Sigmoid colon (tissue), 7 donors: ENCODE measurements at regions of chr20 and their contacts with region 1.

Region 1: DNA sequence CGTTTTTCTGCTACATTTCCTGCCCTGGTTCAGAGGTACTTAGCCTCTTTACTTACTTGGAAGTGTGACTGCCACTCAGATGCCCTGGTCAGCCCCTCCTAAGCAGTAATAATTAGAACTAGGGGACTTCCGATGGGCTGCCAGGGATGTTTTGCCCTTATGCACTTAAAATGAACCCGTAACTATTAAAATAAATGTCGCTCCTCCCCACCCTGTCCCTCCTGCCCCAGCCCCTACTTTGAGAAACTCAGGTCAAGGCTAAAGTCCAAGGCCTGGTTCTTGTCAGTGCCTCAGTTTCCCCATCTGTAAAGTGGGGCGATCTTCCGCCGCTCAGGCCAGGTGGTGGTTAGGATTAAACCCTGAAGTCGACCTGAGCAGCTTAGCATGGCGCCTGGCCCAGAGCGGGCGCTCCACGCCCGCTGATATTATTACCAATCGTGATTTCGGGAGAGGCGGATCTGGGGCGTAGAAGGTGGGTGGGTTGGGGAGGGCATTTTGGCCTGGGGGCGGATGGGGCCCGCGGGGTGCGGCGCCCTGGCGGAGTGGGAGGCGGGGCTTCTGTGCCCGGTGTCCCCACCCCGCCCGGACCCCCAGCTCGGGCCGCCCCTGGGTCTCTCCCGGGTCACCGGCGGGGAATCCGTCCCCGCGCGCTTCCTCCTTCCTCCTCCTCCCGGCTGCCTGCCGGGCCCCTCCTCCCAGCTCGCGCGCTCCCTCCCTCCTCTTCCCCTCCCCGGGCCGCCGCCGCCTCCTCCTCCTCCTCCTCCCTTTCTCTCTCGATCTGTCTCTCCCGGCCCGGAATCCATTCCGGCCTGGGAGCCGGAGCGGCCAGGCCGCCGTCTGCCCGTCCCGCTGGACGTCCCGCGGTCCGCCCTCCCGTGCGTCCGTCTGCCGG is at the start of gene SRC:
- DNase-seq: peak; percentile 95
- H3K4me3 ChIP-seq: peak within 1 kb of the TSS; percentile 60 to 95 (median 83)
- H3K27ac ChIP-seq: peak within 1 kb of the TSS; percentile 89 to 99 (median 93)
- H3K4me1 ChIP-seq: peaks cover 0 to 52% (median 46%) of the 10 kb centered on the region in 4 donors
- H3K27me3 ChIP-seq: no peaks in the 10 kb centered on the region
- CTCF ChIP-seq: no peak
- EP300 ChIP-seq: no peak
- POLR2A ChIP-seq: peak; percentile 59 to 61
- total RNA-seq, gene SRC: 28.1 to 52.3 (median 40.0) TPM

Region 2: DNA sequence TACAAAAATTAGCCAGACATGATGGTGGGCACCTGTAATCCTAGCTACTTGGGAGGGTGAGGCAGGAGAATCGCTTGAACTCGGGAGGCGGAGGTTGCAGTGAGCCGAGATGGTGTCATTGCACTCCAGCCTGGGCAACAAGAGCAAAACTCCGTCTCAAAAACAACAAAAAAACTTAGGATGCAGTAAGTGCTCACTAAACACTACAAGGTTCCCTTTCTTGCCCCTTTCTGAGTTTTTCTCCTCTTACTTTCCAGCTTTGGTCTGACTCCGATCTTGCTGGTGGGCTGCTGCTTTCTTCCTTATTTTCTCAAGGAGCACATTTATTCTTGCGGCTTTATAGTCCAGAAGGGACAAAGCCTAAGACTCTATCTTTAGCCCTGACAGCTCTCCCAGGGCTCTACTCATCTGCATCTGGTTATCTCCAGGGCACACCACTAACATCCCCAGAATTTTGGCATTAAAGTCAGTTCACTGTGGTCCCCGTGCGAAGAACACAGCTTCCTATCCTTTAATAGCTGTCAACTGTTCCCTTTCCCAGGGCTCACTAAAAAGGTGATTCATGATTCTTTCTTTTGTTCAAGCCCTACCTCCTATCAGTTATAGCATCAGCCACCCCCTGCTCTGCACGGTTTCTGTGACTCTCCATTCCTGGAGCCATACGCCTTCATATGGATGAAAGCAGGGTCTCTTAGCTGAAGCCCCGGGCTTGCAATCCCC is 183.6 kb before region 1 on chr20:
- intact Hi-C with region 1: no loop called
- DNase-seq: no peak
- H3K4me3 ChIP-seq: no peak overlapping the region
- H3K27ac ChIP-seq: no peak overlapping the region
- H3K4me1 ChIP-seq: no peaks in the 10 kb centered on the region
- H3K27me3 ChIP-seq: no peaks in the 10 kb centered on the region
- CTCF ChIP-seq: no peak
- EP300 ChIP-seq: no peak
- POLR2A ChIP-seq: no peak

Region 3: GRCh38 chr20:37288091-37288490 is 57.5 kb before region 1 on chr20:
- intact Hi-C with region 1: loop called (anchors 2 kb)
- DNase-seq: no peak
- H3K4me3 ChIP-seq: no peak overlapping the region
- H3K27ac ChIP-seq: peak overlapping the region in 1 of 4 donors; percentile 98
- H3K4me1 ChIP-seq: peaks cover 0 to 19% (median 13%) of the 10 kb centered on the region in 4 donors
- H3K27me3 ChIP-seq: no peaks in the 10 kb centered on the region
- CTCF ChIP-seq: no peak
- EP300 ChIP-seq: no peak
- POLR2A ChIP-seq: no peak

Region 4: DNA sequence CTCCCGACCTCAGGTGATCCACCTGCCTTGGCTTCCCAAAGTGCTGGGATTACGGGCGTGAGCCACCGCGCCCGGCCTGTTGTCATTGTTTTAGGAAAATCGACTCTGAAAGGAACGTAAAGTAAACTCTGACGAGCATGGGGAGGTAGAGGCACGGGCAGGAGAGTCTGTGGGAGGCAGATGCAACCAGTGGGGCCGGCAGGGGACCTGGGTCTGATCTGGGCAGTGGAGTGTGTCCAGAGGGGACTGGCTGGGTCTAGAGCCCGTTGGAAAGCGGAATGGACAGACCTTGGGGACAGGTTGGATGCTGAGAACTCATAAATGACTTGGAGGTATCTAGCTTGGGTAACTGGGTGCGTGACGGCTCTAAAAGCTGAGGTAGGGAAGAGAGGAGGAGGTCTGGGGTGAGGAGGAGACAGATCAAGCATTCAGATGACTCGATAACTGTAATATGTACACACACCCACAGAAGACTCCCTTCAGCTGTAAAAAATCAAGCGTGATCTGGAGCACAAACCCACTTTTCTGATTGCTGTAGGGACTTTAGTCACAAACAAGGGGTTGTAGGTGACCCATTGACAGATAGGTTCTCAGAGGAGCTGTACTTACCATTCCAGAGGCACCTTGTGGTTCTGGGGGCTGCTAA is 33.8 kb before region 1 on chr20:
- intact Hi-C with region 1: loop called (anchors 2 kb)
- DNase-seq: peak; percentile 62
- H3K4me3 ChIP-seq: no peak overlapping the region
- H3K27ac ChIP-seq: peak overlapping the region; percentile 77 to 92 (median 85)
- H3K4me1 ChIP-seq: peaks cover 6 to 78% (median 73%) of the 10 kb centered on the region in 4 donors
- H3K27me3 ChIP-seq: no peaks in the 10 kb centered on the region
- CTCF ChIP-seq: no peak
- EP300 ChIP-seq: no peak
- POLR2A ChIP-seq: no peak

Region 5: DNA sequence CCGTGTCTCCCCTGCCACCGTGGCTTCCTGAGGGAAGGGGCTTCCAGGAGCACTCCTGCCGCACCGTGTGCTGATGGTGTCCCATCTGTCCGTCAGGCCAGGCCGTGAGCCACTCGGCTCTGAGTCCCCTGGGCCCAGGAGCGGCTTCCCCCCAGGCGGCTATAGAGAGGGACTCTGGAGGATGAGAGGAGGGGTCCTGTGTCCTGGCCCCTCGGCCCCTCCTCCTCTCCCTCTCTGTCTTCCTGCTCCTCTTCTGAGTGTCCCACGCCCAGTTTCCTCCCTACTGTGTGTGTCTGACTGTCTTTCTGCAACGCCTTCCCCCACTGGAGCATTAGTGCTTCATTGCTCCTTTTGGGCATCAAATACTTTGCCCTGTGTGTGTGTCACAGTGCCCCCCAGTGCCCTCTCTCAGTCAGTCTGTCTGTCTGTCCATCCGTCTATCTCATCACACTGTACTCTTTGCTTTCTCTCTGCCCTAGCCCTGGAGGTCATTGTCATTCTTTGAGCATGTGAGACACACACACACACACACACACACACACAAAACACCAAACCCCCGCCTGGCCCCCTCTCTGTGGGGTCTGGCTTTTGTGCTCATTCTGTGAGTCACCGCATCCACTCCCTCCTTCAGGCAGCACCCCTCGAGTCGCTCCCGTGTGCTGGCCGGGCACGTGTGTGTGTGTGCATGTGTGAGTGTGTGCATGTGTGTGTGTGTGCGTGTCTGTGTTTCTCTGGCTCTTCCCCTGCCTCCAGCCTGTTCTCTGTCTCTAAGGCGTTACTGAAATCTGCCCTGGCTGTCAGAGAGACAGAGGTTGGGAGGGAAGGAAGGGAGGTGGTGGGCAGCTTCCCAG is 72.3 kb after region 1 on chr20:
- intact Hi-C with region 1: no loop called
- DNase-seq: no peak
- H3K4me3 ChIP-seq: no peak overlapping the region
- H3K27ac ChIP-seq: no peak overlapping the region
- H3K4me1 ChIP-seq: peaks cover 0 to 1% (median 0%) of the 10 kb centered on the region in 4 donors
- H3K27me3 ChIP-seq: peaks cover 0 to 5% (median 0%) of the 10 kb centered on the region in 3 donors
- CTCF ChIP-seq: no peak
- EP300 ChIP-seq: no peak
- POLR2A ChIP-seq: no peak